Breast epithelium (tissue), 4 donors: ENCODE measurements at regions of chr16 and their contacts with region 1.

Region 1: DNA sequence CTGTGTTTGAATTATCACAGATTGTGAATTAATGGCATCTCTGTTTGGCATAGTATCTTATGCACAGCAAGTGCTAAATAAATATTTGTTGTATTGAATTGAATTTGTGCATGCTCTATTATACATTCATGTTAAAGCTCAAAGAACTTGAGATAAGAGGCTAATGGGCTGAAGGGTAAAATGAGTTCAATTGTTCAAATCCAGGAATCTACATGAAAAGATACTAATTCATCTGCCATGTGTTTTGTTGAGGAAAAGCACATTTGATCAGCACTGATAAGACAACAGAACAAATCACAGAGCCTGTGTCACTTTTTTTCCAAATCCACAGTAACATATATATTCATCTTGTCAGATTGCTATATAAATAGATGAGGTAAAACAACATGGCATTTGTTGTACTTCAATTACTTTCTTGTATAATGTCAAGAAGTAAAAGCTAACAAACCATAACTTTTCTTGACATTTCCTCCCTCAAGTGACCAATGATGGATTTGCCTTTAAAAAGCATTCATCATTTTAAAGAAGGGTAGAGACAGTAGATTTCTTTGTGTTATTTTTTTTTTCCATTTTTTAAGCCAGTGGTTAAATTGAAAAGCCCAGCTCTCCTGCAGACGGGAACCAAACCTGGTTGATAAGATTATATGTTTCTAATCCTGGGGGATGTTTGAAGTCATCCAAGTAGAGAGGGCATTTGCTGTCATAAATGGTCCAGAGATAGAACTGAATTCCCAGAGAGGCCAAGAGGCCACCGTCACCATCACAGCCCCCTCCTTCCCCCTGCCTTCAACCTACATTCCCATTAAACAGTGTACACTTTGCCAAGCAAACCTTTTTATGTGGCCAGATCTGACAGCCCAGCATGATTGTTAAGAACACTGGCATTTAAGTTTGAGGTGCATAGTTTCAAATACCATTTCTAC is 123.0 kb downstream of the CHD9NB start:
- DNase-seq: no peak
- H3K4me3 ChIP-seq: no peak overlapping the region
- H3K27ac ChIP-seq: no peak overlapping the region
- H3K4me1 ChIP-seq: no peaks in the 10 kb centered on the region
- H3K27me3 ChIP-seq: no peaks in the 10 kb centered on the region
- CTCF ChIP-seq: no peak
- POLR2A ChIP-seq: no peak

Region 2: GRCh38 chr16:54703339-54703738 is 1773.6 kb after region 1 on chr16:
- intact Hi-C with region 1: loop called (anchors 10 kb)
- DNase-seq: no peak
- H3K4me3 ChIP-seq: no peak overlapping the region
- H3K27ac ChIP-seq: no peak overlapping the region
- H3K4me1 ChIP-seq: no peaks in the 10 kb centered on the region
- H3K27me3 ChIP-seq: no peaks in the 10 kb centered on the region
- CTCF ChIP-seq: no peak
- POLR2A ChIP-seq: no peak